ENCODE measurements at regions of chr10 and their contacts with region 1.

Region 1: GRCh38 chr10:86899670-86900276 is 57.6 kb downstream of the MMRN2 start:
- DNase-seq: peak; percentile 43
- H3K4me3 Mint-ChIP-seq: no peak overlapping the region
- H3K27ac Mint-ChIP-seq: no peak overlapping the region
- H3K4me1 Mint-ChIP-seq: no peaks in the 10 kb centered on the region
- H3K27me3 Mint-ChIP-seq: no peaks in the 10 kb centered on the region

Region 2: GRCh38 chr10:86688398-86688921 is 211.3 kb before region 1 on chr10:
- CTCF ChIA-PET with region 1: interaction called, 28 read pairs
- POLR2A ChIA-PET with region 1: interaction called, 3 read pairs
- DNase-seq: peak; percentile 64
- H3K4me3 Mint-ChIP-seq: no peak overlapping the region
- H3K27ac Mint-ChIP-seq: no peak overlapping the region
- H3K4me1 Mint-ChIP-seq: peaks cover 5% of the 10 kb centered on the region
- H3K27me3 Mint-ChIP-seq: no peaks in the 10 kb centered on the region

Region 3: GRCh38 chr10:86693721-86694369 is 205.9 kb before region 1 on chr10:
- CTCF ChIA-PET with region 1: interaction called, 28 read pairs
- POLR2A ChIA-PET with region 1: interaction called, 3 read pairs
- DNase-seq: peak; percentile 38
- H3K4me3 Mint-ChIP-seq: no peak overlapping the region
- H3K27ac Mint-ChIP-seq: no peak overlapping the region
- H3K4me1 Mint-ChIP-seq: peaks cover 2% of the 10 kb centered on the region
- H3K27me3 Mint-ChIP-seq: peaks cover 4% of the 10 kb centered on the region

Region 4: GRCh38 chr10:86945361-86946212 is 45.8 kb after region 1 on chr10:
- CTCF ChIA-PET with region 1: no interaction called
- POLR2A ChIA-PET with region 1: no interaction called
- DNase-seq: no peak
- H3K4me3 Mint-ChIP-seq: no peak overlapping the region
- H3K27ac Mint-ChIP-seq: no peak overlapping the region
- H3K4me1 Mint-ChIP-seq: peaks cover 27% of the 10 kb centered on the region
- H3K27me3 Mint-ChIP-seq: peaks cover 5% of the 10 kb centered on the region

Measured in activated CD4-positive, alpha-beta memory T cell treated with anti-CD3 and anti-CD28 coated beads, Interleukin-2, amount 10 ng/mL, durations not matched to agents 7 days and 5 days (primary cell).